ENCODE measurements at regions of chr2 and their contacts with region 1.

Region 1: DNA sequence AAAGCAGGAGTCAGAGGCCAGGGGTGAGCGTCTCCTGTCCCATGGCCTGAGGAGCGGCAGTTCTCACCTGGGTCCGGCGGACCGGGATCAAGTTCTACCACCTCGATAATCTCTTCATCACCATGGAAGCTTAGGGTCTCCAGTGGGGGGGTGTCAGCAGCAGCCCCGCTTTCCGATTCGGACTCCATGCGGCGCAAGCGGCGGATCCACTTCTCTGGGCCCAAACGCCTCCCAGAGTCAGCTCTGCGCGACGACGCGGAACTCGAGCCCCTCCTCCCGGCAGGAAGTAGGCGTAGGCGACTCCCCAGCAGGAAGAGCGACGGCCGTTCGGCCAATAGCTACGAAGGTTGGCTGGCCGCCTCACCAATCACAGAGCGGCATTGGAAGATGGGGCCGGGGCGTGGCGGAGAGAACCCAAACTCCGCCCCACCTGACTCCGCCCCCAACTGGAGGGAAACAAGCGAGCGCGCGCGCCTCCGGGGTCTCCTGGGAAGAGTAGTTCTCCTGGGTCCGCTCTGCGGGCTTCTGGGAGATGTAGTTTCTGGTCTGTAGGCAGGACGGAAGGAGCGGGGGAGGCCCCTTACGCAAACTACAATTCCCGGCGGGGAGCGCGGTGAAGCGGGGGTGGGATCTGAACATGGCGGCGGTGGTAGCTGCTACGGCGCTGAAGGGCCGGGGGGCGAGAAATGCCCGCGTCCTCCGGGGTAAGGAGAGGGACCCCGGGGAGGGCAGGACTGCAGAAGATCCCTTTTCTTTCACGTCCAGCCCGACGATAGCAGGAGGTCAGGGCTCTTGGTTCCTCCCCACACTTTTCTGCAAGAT is at the starts of genes AAMP and PNKD:
- DNase-seq: peak; percentile 100
- H3K4me3 Mint-ChIP-seq: peak within 1 kb of the TSS; percentile 89
- H3K27ac Mint-ChIP-seq: peak within 1 kb of the TSS; percentile 75
- H3K4me1 Mint-ChIP-seq: peaks cover 52% of the 10 kb centered on the region
- H3K27me3 Mint-ChIP-seq: no peaks in the 10 kb centered on the region
- total RNA-seq, gene AAMP: 44.2 to 46.8 TPM
- total RNA-seq, gene PNKD: 30.1 to 31.8 TPM

Region 2: DNA sequence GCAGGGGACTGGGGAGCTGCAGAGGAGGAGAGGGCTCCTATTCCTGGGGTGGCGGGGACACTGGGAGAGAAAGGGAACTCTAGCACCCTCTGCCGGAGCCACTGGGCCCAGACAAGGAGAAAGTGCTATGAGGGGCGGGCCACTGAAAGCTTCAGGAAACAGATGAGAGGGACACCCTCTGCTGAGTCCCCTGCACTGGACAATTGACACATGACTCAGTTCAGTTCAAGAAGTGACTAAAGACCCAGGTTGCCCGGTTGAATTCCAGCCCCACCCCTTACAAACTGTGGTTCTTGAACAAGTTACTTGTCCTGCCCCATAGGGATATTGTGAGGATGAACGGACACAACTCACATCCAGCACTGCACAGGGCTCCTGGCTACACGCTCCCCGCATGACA is 196.1 kb before region 1 on chr2:
- CTCF ChIA-PET with region 1: no interaction called
- POLR2A ChIA-PET with region 1: no interaction called
- DNase-seq: peak; percentile 40
- H3K4me3 Mint-ChIP-seq: no peak overlapping the region
- H3K27ac Mint-ChIP-seq: no peak overlapping the region
- H3K4me1 Mint-ChIP-seq: peaks cover 7% of the 10 kb centered on the region
- H3K27me3 Mint-ChIP-seq: peaks cover 4% of the 10 kb centered on the region

Region 3: DNA sequence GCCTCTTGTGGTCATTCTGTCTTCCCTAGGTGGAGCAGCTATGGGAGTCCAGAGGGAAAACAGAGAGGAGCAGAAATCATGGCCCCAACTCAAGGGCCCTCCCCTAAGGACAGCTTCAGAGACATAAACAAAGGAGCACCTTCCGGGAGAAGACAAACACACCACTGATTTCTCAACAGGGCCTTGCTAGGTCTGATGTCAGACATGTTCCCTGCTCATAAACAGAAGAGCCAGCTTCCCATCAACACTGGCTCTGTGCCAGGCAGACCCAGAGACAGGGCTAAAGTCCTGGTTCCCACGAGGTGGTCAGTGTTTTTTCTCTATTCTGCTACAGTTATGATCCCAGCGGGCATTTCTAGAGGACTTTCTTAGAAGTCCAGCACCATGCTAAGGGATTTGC is 125.0 kb before region 1 on chr2:
- CTCF ChIA-PET with region 1: no interaction called
- POLR2A ChIA-PET with region 1: no interaction called
- DNase-seq: no peak
- H3K4me3 Mint-ChIP-seq: no peak overlapping the region
- H3K27ac Mint-ChIP-seq: no peak overlapping the region
- H3K4me1 Mint-ChIP-seq: peaks cover 10% of the 10 kb centered on the region
- H3K27me3 Mint-ChIP-seq: peaks cover 19% of the 10 kb centered on the region

Region 4: DNA sequence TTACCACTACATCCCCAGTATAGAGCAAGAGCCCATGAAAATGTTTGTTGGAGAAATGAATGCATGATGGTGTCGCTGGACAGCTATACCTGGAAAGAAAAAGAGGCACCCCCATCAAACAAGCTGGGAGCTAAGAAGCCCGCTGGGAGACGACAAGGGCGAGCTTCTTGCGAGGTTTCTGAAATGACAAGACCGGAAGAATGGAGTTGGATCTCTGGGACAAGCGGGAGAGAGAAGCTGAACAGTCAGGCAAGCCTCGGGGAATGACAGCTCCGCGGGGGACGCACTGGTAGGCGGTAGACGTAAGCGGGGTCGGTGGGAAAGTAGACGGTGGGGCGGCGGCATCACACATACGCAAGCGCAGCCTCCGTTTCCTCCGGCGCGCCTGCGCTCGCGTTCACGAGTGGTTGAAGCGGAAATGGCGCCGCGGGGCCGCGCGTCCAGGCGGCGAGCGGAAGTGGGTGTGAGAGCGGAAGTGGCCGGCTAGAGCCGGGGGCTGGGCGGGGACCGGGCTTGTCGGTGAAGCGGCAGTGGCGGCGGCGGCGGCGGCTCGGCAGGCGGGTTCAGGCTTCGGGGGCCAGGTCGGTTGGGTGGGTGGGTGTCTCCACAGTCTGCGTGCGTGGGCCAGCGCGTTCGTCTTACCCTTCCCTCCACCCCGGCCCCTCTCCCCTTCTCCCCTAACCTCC is 53.3 kb before region 1 on chr2 and contains the start of gene ARPC2:
- CTCF ChIA-PET with region 1: interaction called, 5 read pairs
- POLR2A ChIA-PET with region 1: interaction called, 13 read pairs
- DNase-seq: peak; percentile 96
- H3K4me3 Mint-ChIP-seq: peak within 1 kb of the TSS; percentile 93
- H3K27ac Mint-ChIP-seq: peak within 1 kb of the TSS; percentile 92
- H3K4me1 Mint-ChIP-seq: peaks cover 41% of the 10 kb centered on the region
- H3K27me3 Mint-ChIP-seq: no peaks in the 10 kb centered on the region
- total RNA-seq, gene ARPC2: 765 to 778 TPM

Region 5: DNA sequence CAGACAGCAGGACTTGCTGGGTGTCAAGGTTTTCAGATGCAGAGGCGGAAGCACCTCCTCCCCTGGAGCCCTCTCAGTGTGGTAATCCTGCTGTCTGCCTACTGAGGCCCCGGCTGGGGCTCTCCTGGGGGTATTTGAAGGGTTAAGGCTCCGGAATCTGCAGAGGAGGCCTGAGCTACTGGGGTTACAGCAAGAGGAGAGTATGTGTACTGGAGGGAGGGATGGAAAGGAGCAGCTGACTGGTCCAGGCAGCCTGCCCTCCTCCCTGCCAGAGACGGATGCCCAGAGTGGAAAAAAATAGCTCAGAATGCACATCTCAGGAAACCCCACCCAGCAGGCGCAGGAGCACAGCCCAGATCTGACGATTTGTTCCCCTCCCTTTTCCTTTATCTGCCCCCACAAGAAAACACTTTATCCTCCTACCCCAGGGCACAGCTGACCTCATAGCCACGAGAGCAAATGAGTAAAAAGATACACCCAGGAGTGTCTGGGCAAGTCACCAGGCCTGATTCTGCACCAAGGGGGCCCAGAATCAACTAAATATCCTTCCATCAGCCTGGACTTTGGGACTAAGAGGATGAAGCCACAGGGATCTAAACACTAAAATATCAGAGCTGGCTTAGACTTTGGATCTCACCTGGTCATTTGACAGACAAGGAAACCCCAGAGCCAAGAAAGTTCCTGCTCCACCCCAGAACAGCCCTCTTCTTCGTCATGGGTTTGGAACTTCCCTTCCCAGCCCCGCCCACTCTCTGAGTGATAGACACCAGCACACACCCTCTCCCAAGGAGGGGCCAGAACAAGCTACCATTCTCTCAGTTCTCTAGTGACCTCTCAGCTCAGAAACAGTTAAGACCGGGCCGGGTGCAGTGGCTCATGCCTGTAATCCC is 16.7 kb after region 1 on chr2:
- CTCF ChIA-PET with region 1: interaction called, 126 read pairs
- POLR2A ChIA-PET with region 1: interaction called, 299 read pairs
- DNase-seq: peak; percentile 87
- H3K4me3 Mint-ChIP-seq: peak overlapping the region; percentile 89
- H3K27ac Mint-ChIP-seq: peak overlapping the region; percentile 89
- H3K4me1 Mint-ChIP-seq: peaks cover 81% of the 10 kb centered on the region
- H3K27me3 Mint-ChIP-seq: no peaks in the 10 kb centered on the region

Region 6: GRCh38 chr2:218292048-218293014 is 22.2 kb after region 1 on chr2 and contains the start of gene TMBIM1:
- CTCF ChIA-PET with region 1: interaction called, 126 read pairs
- POLR2A ChIA-PET with region 1: interaction called, 299 read pairs
- DNase-seq: peak; percentile 84
- H3K4me3 Mint-ChIP-seq: peak within 1 kb of the TSS; percentile 82
- H3K27ac Mint-ChIP-seq: peak within 1 kb of the TSS; percentile 95
- H3K4me1 Mint-ChIP-seq: peaks cover 69% of the 10 kb centered on the region
- H3K27me3 Mint-ChIP-seq: no peaks in the 10 kb centered on the region
- total RNA-seq, gene TMBIM1: 105 to 107 TPM